ENCODE measurements at regions of chr12 and their contacts with region 1.

Region 1: DNA sequence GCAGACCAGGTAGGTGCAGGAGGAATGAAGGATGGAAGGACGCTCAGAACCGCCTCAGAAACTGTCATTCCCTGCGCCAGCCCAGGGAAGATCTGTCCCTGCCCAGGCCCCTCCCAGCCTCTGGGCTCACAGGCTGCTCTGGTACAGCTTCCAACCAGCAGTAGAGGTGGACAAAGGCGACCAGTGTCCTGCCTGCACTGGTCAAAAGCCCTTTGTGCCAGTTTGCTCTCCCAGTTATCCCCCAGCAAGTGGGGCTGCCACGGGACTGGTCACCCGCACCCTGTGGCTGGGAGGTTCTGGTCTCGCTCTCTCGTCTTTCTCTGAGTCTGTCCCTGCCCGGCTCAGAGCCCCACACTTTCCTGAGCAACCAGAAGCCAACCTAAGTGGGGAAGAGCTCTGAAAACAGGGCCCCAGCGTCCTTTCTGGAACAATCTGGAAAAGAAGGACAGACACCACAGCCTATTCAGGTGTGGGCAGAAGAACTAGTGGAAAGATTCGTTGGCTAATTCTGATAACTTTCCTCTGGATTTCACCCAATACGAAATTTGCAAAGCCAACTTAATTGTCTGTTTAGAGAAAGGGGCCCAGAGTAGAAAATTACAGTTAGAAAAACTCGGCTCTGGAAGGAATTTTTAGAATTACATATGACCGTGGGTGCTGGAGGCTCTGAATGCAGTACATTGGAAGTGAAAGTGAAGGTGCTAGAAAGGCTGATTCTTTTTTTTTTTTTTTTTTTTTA is 21.7 kb downstream of the SNRNP35 start:
- DNase-seq: no peak
- H3K4me3 ChIP-seq: no peak overlapping the region
- CTCF ChIP-seq: no peak

Region 2: DNA sequence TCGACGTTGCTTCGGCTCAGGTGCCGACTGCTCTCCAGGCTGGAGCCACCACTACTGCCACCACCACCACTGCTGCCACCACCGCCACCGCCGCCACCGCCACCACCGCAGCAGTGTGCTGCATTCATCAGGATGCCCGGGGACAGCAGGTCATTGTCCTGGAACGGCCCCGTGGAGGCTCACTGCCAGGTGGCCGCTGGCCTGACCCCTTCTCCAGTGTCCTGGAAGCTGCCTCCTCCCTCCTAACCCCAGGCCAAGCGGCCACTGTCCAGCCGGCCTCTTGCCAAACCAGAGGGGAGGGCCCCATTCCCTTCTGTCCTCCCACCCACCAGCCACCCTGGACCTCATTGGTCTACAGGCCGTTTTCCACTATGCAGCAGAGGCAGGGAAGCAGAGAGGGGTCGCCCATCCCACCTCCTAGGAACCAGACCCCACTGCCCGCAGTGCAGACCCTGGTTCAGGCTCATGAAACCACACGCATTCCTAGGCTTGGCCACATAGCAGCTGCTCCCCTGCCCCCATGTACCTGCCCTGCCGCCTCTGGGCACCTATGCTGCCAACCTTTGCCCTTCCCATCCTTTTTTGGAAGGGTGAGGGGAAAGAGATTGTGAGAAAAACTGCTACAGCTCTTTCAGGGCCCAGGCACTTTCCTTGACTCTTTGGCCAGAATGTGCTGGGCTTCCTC is 484.0 kb before region 1 on chr12:
- in situ Hi-C with region 1: loop called (anchors 10 kb)
- DNase-seq: no peak
- H3K4me3 ChIP-seq: no peak overlapping the region
- CTCF ChIP-seq: no peak

Region 3: DNA sequence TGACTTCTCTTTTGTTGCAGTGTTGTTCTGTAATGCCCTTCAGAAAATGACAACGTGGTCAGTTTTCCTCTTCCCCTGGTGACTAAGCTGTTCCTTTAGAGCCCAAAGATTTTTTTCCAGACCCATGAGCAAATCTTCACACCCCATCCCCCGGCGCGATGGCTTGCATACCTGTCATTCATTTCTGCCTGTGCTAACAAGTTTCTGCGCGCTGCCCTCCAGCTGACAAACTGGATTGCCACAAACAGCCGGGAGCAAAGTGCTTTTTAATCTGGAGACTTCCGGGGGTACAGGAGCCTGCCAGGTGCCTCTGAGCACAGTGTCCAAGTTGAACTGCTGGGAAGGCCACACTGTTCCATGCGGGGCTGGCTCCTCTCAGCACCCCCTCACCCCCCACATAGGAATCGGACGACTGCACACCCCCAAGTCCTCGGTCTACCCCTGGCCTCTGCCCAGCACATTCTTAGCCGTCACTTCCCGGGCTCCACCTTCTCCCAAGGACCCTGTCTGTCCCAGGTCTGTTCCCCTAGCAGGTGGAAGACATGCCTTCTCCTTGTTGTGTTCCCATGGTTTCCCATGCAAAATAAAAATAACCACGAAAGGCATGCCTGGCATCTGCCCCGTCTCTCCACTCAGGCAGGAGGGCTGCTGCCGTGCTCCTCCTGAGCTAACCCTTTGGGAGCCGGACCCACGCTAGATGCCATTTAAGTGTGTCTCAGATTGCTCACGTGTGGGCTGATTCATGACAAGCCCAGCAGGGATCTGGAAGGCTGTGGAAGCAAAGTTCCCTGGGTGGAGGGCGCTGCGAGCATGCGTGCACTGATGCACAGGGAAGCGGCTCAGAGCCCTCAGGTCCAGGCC is 39.8 kb after region 1 on chr12:
- in situ Hi-C with region 1: loop called (anchors 5 kb)
- DNase-seq: peak; percentile 89
- H3K4me3 ChIP-seq: no peak overlapping the region
- CTCF ChIP-seq: no peak

Region 4: GRCh38 chr12:123591702-123592481 is 112.3 kb after region 1 on chr12:
- in situ Hi-C with region 1: loop called (anchors 10 kb)
- DNase-seq: no peak
- H3K4me3 ChIP-seq: no peak overlapping the region
- CTCF ChIP-seq: no peak

Measured in astrocyte of the cerebellum (primary cell).